ENCODE measurements at regions of chr1 and their contacts with region 1.

Region 1: DNA sequence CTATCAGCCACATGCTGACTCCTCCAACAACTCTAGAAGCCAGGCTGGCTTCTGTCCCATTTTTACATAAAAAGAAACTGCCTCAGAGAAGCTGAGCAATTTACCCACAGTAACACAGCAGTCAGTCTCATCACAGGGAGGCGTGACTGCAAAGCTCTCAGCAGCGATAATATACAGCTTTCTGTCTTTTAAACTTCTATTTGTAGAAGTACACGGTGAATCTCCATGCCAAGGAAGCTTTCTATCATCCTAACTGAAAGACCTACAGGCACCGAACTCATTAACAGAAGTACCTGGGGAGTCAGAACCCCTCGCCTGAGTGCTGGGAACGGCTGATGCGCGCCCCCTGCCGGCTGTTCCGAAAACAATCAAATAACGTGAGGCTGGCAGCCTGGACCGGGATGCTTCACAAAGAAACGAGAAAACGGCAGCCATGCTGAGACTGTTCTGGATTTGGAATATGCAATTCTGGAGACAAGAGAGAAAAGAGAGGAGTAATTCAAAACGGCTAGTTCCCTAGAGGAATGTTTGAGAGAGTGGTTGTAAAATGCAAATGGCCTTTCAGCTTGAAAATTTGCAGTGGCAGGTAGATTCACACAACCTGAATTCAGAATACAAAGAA is 43.5 kb upstream of the RAB4A start:
- DNase-seq: peak; percentile 77 to 87
- ATAC-seq: peak in 3 of 4 donors; percentile 37 to 70 (median 49)
- H3K4me3 ChIP-seq: no peak overlapping the region
- H3K27ac ChIP-seq: no peak overlapping the region
- H3K4me1 ChIP-seq: peaks cover 17% of the 10 kb centered on the region
- H3K27me3 ChIP-seq: no peaks in the 10 kb centered on the region
- CTCF ChIP-seq: peak; percentile 86

Region 2: DNA sequence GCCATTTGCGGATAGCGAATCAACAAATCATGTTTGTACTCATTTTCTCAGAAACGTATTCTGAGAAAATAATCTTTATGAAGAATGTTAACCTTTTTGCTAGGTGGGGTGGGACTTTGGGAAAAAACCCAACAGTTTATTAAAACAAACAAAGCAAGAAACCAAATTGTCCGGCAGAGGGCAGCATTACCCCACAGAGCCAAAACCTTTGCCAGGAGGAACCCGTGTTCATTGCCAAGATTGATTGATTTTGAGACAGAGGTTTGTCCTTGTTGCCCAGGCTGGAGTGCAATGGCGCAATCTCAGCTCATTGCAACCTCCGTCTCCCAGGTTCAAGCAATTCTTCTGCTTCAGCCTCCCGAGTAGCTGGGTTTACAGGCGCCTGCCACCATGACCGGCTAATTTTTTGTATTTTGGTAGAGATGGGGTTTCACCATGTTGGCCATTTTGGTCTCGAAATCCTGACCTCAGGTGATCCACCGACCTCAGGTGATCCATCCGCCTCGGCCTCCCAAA is 563.0 kb before region 1 on chr1:
- intact Hi-C with region 1: loop called in 1 of 2 experiments (anchors 1 kb)
- DNase-seq: peak; percentile 62 to 81
- ATAC-seq: peak in 2 of 4 donors; percentile 32 to 73
- H3K4me3 ChIP-seq: no peak overlapping the region
- H3K27ac ChIP-seq: no peak overlapping the region
- H3K4me1 ChIP-seq: no peaks in the 10 kb centered on the region
- H3K27me3 ChIP-seq: peaks cover 0 to 2% (median 0%) of the 10 kb centered on the region in 3 donors
- CTCF ChIP-seq: peak; percentile 85

Region 3: GRCh38 chr1:228691926-228692325 is 535.5 kb before region 1 on chr1:
- intact Hi-C with region 1: loop called in 1 of 2 experiments (anchors 10 kb)
- DNase-seq: no peak
- ATAC-seq: peak in 2 of 4 donors; percentile 50 to 75
- H3K4me3 ChIP-seq: no peak overlapping the region
- H3K27ac ChIP-seq: no peak overlapping the region
- H3K4me1 ChIP-seq: no peaks in the 10 kb centered on the region
- H3K27me3 ChIP-seq: peaks cover 0 to 6% (median 2%) of the 10 kb centered on the region in 3 donors
- CTCF ChIP-seq: peak; percentile 52

Region 4: DNA sequence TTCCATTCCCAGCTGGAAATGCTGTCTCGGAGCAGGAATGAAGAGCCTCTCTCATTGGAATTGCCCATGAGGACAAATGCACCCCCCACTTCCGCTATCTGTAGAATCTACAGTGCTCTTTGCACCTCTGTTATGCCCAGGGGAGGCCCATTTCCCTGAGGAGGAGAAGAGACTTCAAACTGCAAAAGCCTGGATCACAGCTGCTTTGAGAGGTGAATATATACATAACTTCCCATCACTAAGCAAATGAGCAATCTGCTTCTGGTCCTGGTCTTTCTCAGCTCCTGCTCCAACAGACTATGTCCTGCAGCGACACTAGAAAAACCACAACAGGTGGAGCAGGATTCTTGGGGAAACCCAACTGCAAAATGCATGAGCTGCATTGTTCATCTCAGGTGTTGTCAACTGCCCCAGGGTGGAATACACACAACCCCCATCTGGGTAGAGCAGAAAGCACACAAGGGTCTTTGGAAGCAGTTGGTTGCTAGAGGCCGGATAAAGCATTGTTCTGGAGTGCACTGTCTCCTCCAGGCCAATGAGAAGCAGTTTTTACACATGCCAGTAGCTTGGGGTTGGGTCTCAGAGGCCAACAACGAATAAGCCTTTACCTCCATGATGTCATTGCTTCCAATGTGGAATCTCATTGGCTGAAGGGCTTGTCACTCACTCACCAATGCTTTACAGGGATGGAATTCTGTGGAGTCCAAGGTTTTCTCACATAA is 24.2 kb before region 1 on chr1:
- intact Hi-C with region 1: no loop called
- DNase-seq: no peak
- ATAC-seq: peak in 1 of 4 donors; percentile 42
- H3K4me3 ChIP-seq: no peak overlapping the region
- H3K27ac ChIP-seq: no peak overlapping the region
- H3K4me1 ChIP-seq: peaks cover 7% of the 10 kb centered on the region
- H3K27me3 ChIP-seq: no peaks in the 10 kb centered on the region
- CTCF ChIP-seq: no peak

Region 5: GRCh38 chr1:229370601-229371021 is 143.2 kb after region 1 on chr1:
- intact Hi-C with region 1: no loop called
- DNase-seq: peak; percentile 76 to 92
- ATAC-seq: peak; percentile 88 to 97 (median 96)
- H3K4me3 ChIP-seq: no peak overlapping the region
- H3K27ac ChIP-seq: peak overlapping the region; percentile 1
- H3K4me1 ChIP-seq: peaks cover 18% of the 10 kb centered on the region
- H3K27me3 ChIP-seq: no peaks in the 10 kb centered on the region
- CTCF ChIP-seq: peak; percentile 17

Region 6: GRCh38 chr1:229579059-229579673 is 351.8 kb after region 1 on chr1:
- intact Hi-C with region 1: no loop called
- DNase-seq: no peak
- ATAC-seq: peak; percentile 34 to 64 (median 45)
- H3K4me3 ChIP-seq: peak overlapping the region; percentile 13
- H3K27ac ChIP-seq: no peak overlapping the region
- H3K4me1 ChIP-seq: peaks cover 7% of the 10 kb centered on the region
- H3K27me3 ChIP-seq: no peaks in the 10 kb centered on the region
- CTCF ChIP-seq: no peak